ENCODE measurements at regions of chr3 and their contacts with region 1.

Region 1: GRCh38 chr3:150763122-150763841 is at the start of gene SIAH2:
- DNase-seq: peak; percentile 94 to 98 (median 95)
- H3K4me3 ChIP-seq: peak within 1 kb of the TSS; percentile 80 to 97
- H3K4me3 Mint-ChIP-seq: peak within 1 kb of the TSS; percentile 97 to 100 (median 98)
- H3K27ac ChIP-seq: peak within 1 kb of the TSS; percentile 98
- H3K27ac Mint-ChIP-seq: peak within 1 kb of the TSS; percentile 98 to 100 (median 100)
- H3K4me1 ChIP-seq: peaks cover 47% of the 10 kb centered on the region
- H3K4me1 Mint-ChIP-seq: peaks cover 26 to 60% (median 47%) of the 10 kb centered on the region in 4 donors
- H3K27me3 ChIP-seq: no peaks in the 10 kb centered on the region
- H3K27me3 Mint-ChIP-seq: no peaks in the 10 kb centered on the region
- total RNA-seq, gene SIAH2: 28.3 to 29.5 TPM

Region 2: GRCh38 chr3:150546226-150547044 is 216.8 kb before region 1 on chr3 and contains the starts of genes EIF2A and SERP1:
- CTCF ChIA-PET with region 1: interaction called, 7 read pairs
- POLR2A ChIA-PET with region 1: interaction called, 150 read pairs
- intact Hi-C with region 1: loop called (anchors 1 kb)
- DNase-seq: peak; percentile 99 to 100 (median 100)
- H3K4me3 ChIP-seq: peak within 1 kb of the TSS; percentile 77 to 89
- H3K4me3 Mint-ChIP-seq: peak within 1 kb of the TSS; percentile 92 to 99 (median 97)
- H3K27ac ChIP-seq: peak within 1 kb of the TSS; percentile 99
- H3K27ac Mint-ChIP-seq: peak within 1 kb of the TSS; percentile 95 to 100 (median 99)
- H3K4me1 ChIP-seq: peaks cover 62% of the 10 kb centered on the region
- H3K4me1 Mint-ChIP-seq: peaks cover 39 to 81% (median 61%) of the 10 kb centered on the region in 4 donors
- H3K27me3 ChIP-seq: no peaks in the 10 kb centered on the region
- H3K27me3 Mint-ChIP-seq: no peaks in the 10 kb centered on the region
- total RNA-seq, gene EIF2A: 90.8 to 95.3 TPM
- total RNA-seq, gene SERP1: 122 to 128 TPM

Region 3: GRCh38 chr3:150703299-150704134 is 59.8 kb before region 1 on chr3 and contains the start of gene ERICH6:
- CTCF ChIA-PET with region 1: interaction called, 16 read pairs
- POLR2A ChIA-PET with region 1: interaction called, 94 read pairs
- intact Hi-C with region 1: loop called (anchors 1 kb)
- DNase-seq: peak; percentile 75 to 84 (median 82)
- H3K4me3 ChIP-seq: peak within 1 kb of the TSS; percentile 78 to 88
- H3K4me3 Mint-ChIP-seq: peak within 1 kb of the TSS; percentile 92 to 99 (median 96)
- H3K27ac ChIP-seq: peak within 1 kb of the TSS; percentile 82
- H3K27ac Mint-ChIP-seq: peak within 1 kb of the TSS; percentile 94 to 99 (median 98)
- H3K4me1 ChIP-seq: peaks cover 14% of the 10 kb centered on the region
- H3K4me1 Mint-ChIP-seq: peaks cover 11 to 30% (median 19%) of the 10 kb centered on the region in 4 donors
- H3K27me3 ChIP-seq: no peaks in the 10 kb centered on the region
- H3K27me3 Mint-ChIP-seq: no peaks in the 10 kb centered on the region
- total RNA-seq, gene ERICH6: not detected

Region 4: DNA sequence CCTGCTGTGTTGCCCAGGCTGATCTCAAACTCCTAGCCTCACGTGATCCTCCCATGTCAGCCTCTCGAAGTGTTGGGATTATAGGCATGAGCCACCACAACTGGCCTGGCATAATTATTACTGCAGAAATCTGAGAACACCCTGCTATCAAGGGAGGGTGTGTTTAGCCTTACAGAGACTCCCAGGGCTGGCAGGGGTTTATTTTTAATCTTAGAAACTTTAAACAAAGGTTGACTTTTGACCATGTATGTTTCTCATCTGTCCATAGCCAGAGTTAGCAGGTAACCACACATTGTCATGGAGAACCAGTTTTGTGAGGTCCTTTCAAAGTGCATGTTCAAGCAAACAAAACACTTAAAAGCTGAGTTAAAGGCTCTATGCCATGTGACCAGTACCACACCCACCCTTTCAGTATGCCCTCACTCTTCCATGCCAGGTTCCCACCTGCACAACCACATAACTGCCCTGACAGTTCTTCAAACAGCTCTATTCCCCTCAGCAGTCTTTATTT is 11.5 kb before region 1 on chr3:
- CTCF ChIA-PET with region 1: interaction called, 7 read pairs
- POLR2A ChIA-PET with region 1: interaction called, 26 read pairs
- intact Hi-C with region 1: no loop called
- DNase-seq: no peak
- H3K4me3 ChIP-seq: no peak overlapping the region
- H3K4me3 Mint-ChIP-seq: peak overlapping the region in 1 of 8 donors; percentile 47
- H3K27ac ChIP-seq: no peak overlapping the region
- H3K27ac Mint-ChIP-seq: peak overlapping the region in 5 of 7 donors; percentile 35 to 62 (median 48)
- H3K4me1 ChIP-seq: peaks cover 63% of the 10 kb centered on the region
- H3K4me1 Mint-ChIP-seq: peaks cover 56 to 91% (median 77%) of the 10 kb centered on the region in 4 donors
- H3K27me3 ChIP-seq: no peaks in the 10 kb centered on the region
- H3K27me3 Mint-ChIP-seq: no peaks in the 10 kb centered on the region

Region 5: DNA sequence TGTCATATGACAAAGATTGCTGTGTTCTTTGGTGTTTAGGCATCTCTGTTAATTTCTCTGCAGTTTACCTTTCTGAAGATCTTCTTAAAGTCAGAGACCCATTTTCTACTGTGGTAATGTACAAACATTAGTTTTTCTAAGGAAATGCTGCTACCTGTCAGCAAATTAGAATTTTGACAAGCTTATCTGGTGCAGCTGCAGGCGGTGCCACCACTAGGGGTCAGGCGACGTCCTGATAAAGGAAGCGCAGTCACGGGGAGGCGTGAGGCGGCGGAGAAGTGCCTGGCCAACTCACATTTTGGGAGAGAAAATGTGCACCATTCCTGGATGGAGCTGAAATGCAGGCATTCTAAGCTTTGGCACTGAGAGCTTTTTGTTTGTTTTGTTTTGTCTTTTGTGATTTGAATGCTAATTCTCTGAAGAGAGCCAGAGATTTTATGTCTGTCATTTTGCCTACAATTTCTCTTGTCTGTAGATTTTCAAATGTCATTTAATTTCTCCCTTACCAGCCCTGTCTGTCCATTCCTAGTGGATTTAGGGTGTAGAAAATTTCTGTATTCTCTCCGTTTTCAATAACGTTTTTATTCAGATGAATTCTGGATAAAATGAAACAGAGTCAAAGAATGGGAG is 24.6 kb after region 1 on chr3:
- CTCF ChIA-PET with region 1: interaction called, 85 read pairs
- POLR2A ChIA-PET with region 1: interaction called, 10 read pairs
- intact Hi-C with region 1: loop called (anchors 1 kb)
- DNase-seq: peak; percentile 58 to 78 (median 65)
- H3K4me3 ChIP-seq: no peak overlapping the region
- H3K4me3 Mint-ChIP-seq: peak overlapping the region in 4 of 8 donors; percentile 0 to 40 (median 22)
- H3K27ac ChIP-seq: no peak overlapping the region
- H3K27ac Mint-ChIP-seq: peak overlapping the region in 1 of 7 donors; percentile 58
- H3K4me1 ChIP-seq: peaks cover 5% of the 10 kb centered on the region
- H3K4me1 Mint-ChIP-seq: peaks cover 0 to 5% (median 4%) of the 10 kb centered on the region in 4 donors
- H3K27me3 ChIP-seq: no peaks in the 10 kb centered on the region
- H3K27me3 Mint-ChIP-seq: peaks cover 4 to 7% of the 10 kb centered on the region in 2 donors

Region 6: DNA sequence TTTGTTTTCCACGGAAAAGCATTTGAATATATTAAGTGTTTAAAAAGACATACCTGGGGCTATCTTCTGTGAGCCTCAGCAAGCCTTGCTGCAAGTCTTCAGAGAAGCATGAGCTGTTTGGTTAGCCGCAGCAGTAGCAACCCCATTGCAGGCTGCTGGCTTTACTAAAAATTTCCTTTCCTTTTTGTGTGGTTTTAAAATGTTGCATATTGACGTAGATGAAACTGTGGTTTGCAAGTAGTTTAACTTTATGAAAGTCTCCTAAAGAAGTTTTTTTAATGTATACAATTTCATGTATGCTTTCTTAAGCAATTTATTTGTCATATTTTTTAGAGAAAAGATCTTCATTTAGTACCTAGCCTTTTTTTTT is 439.8 kb after region 1 on chr3 and contains the start of gene GPR171:
- CTCF ChIA-PET with region 1: no interaction called
- POLR2A ChIA-PET with region 1: interaction called, 13 read pairs
- intact Hi-C with region 1: loop called (anchors 5 kb)
- DNase-seq: peak; percentile 80 to 87 (median 82)
- H3K4me3 ChIP-seq: peak within 1 kb of the TSS; percentile 59 to 63
- H3K4me3 Mint-ChIP-seq: peak within 1 kb of the TSS; percentile 73 to 89 (median 86)
- H3K27ac ChIP-seq: peak within 1 kb of the TSS; percentile 75
- H3K27ac Mint-ChIP-seq: peak within 1 kb of the TSS; percentile 87 to 98 (median 97)
- H3K4me1 ChIP-seq: peaks cover 83% of the 10 kb centered on the region
- H3K4me1 Mint-ChIP-seq: peaks cover 45 to 94% (median 59%) of the 10 kb centered on the region in 4 donors
- H3K27me3 ChIP-seq: no peaks in the 10 kb centered on the region
- H3K27me3 Mint-ChIP-seq: no peaks in the 10 kb centered on the region
- total RNA-seq, gene GPR171: 116 to 129 TPM

Measured in CD4-positive, alpha-beta memory T cell (primary cell).